PC-9 (cell line): ENCODE measurements at regions of chr10 and their contacts with region 1.

Region 1: GRCh38 chr10:68135922-68136718 is 26.8 kb downstream of the MYPN start:
- DNase-seq: peak; percentile 52 to 91
- H3K4me3 ChIP-seq: peak overlapping the region; percentile 23; the same call in 1 of the 2 replicates
- H3K27ac ChIP-seq: peak overlapping the region; percentile 90
- H3K4me1 ChIP-seq: peaks cover 64% of the 10 kb centered on the region
- H3K27me3 ChIP-seq: no peaks in the 10 kb centered on the region
- CTCF ChIP-seq: no peak

Region 2: GRCh38 chr10:67306588-67307205 is 829.4 kb before region 1 on chr10:
- CTCF ChIA-PET with region 1: no interaction called
- POLR2A ChIA-PET with region 1: no interaction called
- intact Hi-C with region 1: no loop called
- DNase-seq: no peak
- H3K4me3 ChIP-seq: no peak overlapping the region
- H3K27ac ChIP-seq: no peak overlapping the region
- H3K4me1 ChIP-seq: no peaks in the 10 kb centered on the region
- H3K27me3 ChIP-seq: no peaks in the 10 kb centered on the region
- CTCF ChIP-seq: peak; percentile 78

Region 3: DNA sequence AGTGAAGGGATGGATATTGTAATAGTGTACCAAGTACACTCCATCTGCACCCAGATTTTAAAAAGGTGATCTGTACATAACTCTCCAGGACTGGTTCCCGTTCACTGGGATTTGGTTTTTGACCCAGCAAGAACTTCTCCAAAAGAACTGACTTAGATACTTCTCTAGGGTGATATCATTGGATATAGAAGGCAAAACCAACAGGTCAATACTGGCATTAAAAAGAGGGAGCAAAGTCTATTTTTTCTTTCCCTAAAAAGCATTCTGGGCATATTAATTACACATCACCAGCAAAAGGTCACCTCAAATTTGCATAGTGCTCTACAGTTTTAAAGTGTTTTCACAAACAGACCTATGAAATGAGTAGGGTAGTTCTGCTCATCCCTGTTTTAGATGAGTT is 23.3 kb before region 1 on chr10:
- CTCF ChIA-PET with region 1: no interaction called
- POLR2A ChIA-PET with region 1: interaction called, 10 read pairs
- intact Hi-C with region 1: no loop called
- DNase-seq: no peak
- H3K4me3 ChIP-seq: no peak overlapping the region
- H3K27ac ChIP-seq: no peak overlapping the region
- H3K4me1 ChIP-seq: no peaks in the 10 kb centered on the region
- H3K27me3 ChIP-seq: no peaks in the 10 kb centered on the region
- CTCF ChIP-seq: no peak

Region 4: DNA sequence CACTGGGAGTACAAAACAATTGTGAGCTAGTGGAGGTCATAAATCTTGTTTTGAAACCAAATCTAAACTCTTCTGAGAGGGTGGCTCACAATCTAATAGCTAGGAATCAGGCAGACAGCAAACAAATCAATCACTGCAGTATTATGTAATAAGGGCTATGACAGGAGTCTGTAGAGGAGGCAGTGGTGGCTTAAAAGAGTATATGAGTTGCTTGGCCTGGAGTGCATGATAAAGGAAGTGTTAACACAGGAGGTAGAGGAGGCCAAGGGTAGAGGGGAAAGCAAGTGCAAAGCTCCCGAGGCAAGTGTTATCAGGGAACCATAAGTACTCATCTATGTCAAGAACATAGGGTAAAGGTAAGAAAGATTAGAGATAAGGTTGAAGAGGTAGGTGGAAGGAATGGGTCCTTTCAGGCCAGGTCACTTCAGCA is 10.3 kb before region 1 on chr10:
- CTCF ChIA-PET with region 1: no interaction called
- POLR2A ChIA-PET with region 1: no interaction called
- intact Hi-C with region 1: no loop called
- DNase-seq: peak in 1 of 2 experiments; percentile 95
- H3K4me3 ChIP-seq: no peak overlapping the region
- H3K27ac ChIP-seq: peak overlapping the region; percentile 60
- H3K4me1 ChIP-seq: peaks cover 35% of the 10 kb centered on the region
- H3K27me3 ChIP-seq: no peaks in the 10 kb centered on the region
- CTCF ChIP-seq: no peak

Region 5: GRCh38 chr10:68163735-68164134 is 27.6 kb after region 1 on chr10:
- CTCF ChIA-PET with region 1: no interaction called
- POLR2A ChIA-PET with region 1: no interaction called
- intact Hi-C with region 1: no loop called
- DNase-seq: no peak
- H3K4me3 ChIP-seq: no peak overlapping the region
- H3K27ac ChIP-seq: no peak overlapping the region
- H3K4me1 ChIP-seq: no peaks in the 10 kb centered on the region
- H3K27me3 ChIP-seq: no peaks in the 10 kb centered on the region
- CTCF ChIP-seq: no peak

Region 6: GRCh38 chr10:68348265-68348741 is 212.2 kb after region 1 on chr10:
- CTCF ChIA-PET with region 1: no interaction called
- POLR2A ChIA-PET with region 1: no interaction called
- intact Hi-C with region 1: no loop called
- DNase-seq: peak in 1 of 2 experiments; percentile 38
- H3K4me3 ChIP-seq: no peak overlapping the region
- H3K27ac ChIP-seq: no peak overlapping the region
- H3K4me1 ChIP-seq: no peaks in the 10 kb centered on the region
- H3K27me3 ChIP-seq: no peaks in the 10 kb centered on the region
- CTCF ChIP-seq: peak; percentile 88